ENCODE measurements at regions of chr14 and their contacts with region 1.

Region 1: GRCh38 chr14:80987235-80988032 is 32.0 kb downstream of the TSHR start:
- DNase-seq: peak; percentile 78
- H3K4me3 ChIP-seq: no peak overlapping the region
- H3K27ac ChIP-seq: peak overlapping the region in 1 of 4 donors; percentile 2
- H3K4me1 ChIP-seq: peaks cover 0 to 6% (median 2%) of the 10 kb centered on the region in 4 donors
- H3K27me3 ChIP-seq: peaks cover 4% of the 10 kb centered on the region
- CTCF ChIP-seq: peak; percentile 90 to 95 (median 93)
- EP300 ChIP-seq: no peak
- POLR2A ChIP-seq: no peak

Region 2: DNA sequence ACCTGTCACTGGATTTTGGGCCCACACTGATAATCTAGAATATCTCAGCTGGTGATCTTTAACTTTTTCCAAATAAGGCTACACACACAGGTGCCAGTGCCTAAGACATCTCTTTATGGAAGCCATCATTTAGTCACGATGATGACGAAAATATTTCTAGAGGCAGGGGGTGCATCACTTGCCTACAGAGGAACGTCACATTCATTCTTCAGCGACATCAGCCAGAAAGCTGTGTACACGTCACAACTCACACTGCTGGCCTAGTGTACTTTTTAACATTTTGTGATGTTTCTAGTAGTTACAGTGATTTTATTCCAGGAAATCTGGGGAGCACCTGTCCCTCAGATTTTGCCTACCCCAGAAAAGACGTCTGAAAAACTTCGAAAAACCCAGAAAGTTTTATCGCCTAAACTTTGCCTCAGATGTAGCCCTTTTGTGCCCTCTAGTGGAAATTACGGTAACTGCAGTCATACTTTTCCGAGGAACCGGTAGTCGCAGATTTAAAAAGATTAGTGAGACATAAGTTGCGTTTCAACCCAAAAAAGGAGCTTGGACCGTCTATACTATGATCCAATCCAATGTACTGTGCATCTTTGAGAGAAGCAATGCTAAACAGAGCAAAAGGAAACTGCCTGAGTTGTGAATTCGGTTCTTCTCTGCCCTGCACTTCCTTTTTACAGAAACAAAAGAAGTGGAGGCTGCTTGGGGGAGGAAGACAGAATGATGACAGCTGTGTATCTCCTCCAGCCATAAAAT is 477.0 kb after region 1 on chr14:
- in situ Hi-C with region 1: loop called in 3 of 4 experiments (anchors 25 kb)
- intact Hi-C with region 1: no loop called
- DNase-seq: peak; percentile 54
- H3K4me3 ChIP-seq: peak overlapping the region; percentile 20 to 48 (median 26)
- H3K27ac ChIP-seq: peak overlapping the region; percentile 29 to 71 (median 59)
- H3K4me1 ChIP-seq: peaks cover 0 to 6% (median 0%) of the 10 kb centered on the region in 4 donors
- H3K27me3 ChIP-seq: no peaks in the 10 kb centered on the region
- CTCF ChIP-seq: peak; percentile 90 to 96 (median 94)
- EP300 ChIP-seq: no peak
- POLR2A ChIP-seq: no peak